SK-N-SH (cell line): ENCODE measurements at regions of chr16 and their contacts with region 1.

Region 1: DNA sequence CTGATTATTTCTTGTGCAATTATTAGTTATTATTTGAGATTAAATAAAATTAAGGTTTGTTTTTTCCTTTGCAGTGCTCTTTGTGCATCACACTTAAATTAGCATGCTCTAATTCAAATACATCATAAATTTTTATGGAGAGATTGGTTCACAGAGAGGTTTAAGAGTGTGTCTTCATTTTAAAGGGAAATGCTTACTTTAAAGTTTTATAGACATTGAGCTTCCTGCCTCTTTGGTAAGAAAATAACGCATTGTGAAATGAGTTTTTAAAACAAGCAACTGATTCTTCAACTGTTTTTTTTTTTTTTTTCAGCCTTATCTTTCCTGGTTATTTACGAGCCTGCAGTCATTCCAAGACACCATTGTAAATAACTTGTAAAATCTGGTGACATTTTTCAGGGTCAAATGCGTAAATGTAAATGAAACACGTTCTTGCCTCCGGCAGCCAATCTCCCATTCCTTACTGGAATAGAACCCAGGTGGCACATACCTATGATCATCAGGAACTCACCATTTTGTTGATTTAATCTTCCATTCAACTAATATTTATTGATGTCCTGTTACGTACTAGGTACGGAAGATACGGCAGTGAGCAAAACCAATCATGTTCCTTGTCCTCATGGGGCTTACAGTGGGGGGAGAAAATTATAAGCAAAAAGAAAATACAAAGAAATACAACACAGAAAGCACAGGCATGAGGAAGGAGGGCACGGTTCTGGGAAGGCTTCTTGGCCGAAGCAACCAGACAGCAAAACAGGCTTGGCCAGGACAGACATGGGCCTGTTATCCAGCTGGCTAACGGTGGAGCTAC is 33.2 kb upstream of the CDYL2 start:
- DNase-seq: no peak
- H3K4me3 ChIP-seq: no peak overlapping the region
- H3K27ac ChIP-seq: no peak overlapping the region
- H3K4me1 ChIP-seq: no peaks in the 10 kb centered on the region
- H3K27me3 ChIP-seq: no peaks in the 10 kb centered on the region; the same call in 1 of the 2 replicates
- CTCF ChIP-seq: no peak
- EP300 ChIP-seq: no peak
- RAD21 ChIP-seq: no peak

Region 2: GRCh38 chr16:80804056-80804450 is 33.6 kb before region 1 on chr16:
- CTCF ChIA-PET with region 1: no interaction called
- POLR2A ChIA-PET with region 1: no interaction called
- DNase-seq: no peak
- H3K4me3 ChIP-seq: peak overlapping the region; percentile 57 to 59; a peak in 3 of 4 replicates
- H3K27ac ChIP-seq: no peak overlapping the region
- H3K4me1 ChIP-seq: peaks cover 0 to 7% of the 10 kb centered on the region in 2 experiments; a peak in 1 of 4 replicates
- H3K27me3 ChIP-seq: no peaks in the 10 kb centered on the region
- CTCF ChIP-seq: no peak
- EP300 ChIP-seq: no peak
- RAD21 ChIP-seq: no peak

Region 3: DNA sequence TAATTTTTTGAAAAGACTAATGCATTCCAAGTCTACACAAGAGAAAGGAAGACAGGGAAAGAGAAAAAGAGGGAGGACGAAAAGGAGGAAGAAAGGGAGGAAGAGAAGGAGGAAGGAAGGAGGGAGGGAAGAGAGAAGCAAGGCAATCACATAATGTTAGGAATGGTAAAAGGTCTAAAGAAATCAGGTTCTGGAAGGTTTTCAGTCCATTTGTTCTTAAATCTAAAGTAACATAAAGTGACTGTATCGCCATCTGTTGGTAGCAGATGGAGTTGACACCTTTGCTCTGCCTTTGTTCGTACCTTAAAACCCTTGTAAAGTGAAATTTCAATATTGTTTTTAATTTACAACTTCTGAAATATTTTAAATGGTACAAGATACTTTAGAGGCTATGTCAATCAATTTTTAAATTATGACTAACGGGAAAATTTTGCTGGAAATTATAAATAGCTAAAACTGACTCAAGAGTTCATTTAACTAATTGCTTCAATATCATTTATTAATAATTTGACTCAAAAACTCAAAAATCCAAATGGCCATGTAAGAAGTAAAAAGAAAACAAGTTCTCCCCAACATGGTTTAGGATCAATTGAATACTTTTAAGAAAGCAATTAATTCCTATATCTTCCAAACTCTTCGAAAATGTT is 12.8 kb before region 1 on chr16:
- CTCF ChIA-PET with region 1: interaction called, 26 read pairs
- POLR2A ChIA-PET with region 1: no interaction called
- DNase-seq: peak; percentile 38
- H3K4me3 ChIP-seq: no peak overlapping the region; a peak in 1 of 4 replicates
- H3K27ac ChIP-seq: no peak overlapping the region
- H3K4me1 ChIP-seq: no peaks in the 10 kb centered on the region
- H3K27me3 ChIP-seq: no peaks in the 10 kb centered on the region; the same call in 1 of the 2 replicates
- CTCF ChIP-seq: peak; percentile 84
- EP300 ChIP-seq: no peak
- RAD21 ChIP-seq: peak; percentile 60

Region 4: DNA sequence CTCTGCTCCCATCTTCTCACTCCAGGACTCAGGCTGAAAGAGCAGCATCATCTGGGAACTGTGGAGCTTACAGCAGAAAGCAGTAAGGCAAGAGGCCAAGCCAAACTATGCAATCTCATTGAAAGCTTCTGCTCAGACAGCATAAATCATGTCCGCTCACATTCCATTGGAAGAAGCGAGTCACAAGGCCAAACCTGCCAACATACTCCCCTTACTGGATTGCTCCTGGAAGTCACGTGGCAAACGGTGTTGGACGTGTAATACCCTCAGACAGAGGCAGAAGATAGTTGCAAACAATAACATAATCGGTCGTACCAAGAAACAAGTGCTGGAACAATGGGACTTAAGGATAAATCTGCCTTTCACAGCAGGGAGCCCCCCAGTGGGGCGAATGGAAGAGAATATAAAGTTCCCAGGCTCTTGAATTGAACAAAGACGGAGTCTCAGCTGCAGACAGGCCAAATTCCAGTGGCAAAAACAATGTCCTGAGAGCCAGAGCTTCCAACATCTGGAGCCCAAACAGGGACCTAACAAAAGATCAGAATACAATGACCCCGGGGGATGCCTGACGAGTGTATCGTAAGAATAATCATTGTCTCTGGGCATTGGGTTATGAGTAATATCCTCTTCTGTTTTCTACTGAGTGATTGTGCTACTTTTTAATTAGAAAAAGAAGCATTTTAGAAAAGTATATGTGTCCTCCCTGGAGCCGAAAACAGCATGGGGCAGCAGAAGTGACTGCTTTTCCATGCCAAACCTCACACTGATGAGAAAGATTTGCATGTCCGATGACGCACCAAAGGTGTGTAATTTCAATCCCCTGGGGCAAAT is 100.6 kb after region 1 on chr16:
- CTCF ChIA-PET with region 1: no interaction called
- POLR2A ChIA-PET with region 1: no interaction called
- DNase-seq: no peak
- H3K4me3 ChIP-seq: peak overlapping the region; percentile 7 to 24; a peak in 2 of 4 replicates
- H3K27ac ChIP-seq: peak overlapping the region; percentile 62 to 80
- H3K4me1 ChIP-seq: peaks cover 0 to 10% of the 10 kb centered on the region in 2 experiments; a peak in 2 of 4 replicates
- H3K27me3 ChIP-seq: no peaks in the 10 kb centered on the region
- CTCF ChIP-seq: 0 out of 2 replicates have a peak, but pooled peaks have one; percentile 6
- EP300 ChIP-seq: peak in 1 of 2 experiments; percentile 55; a peak in 1 of 4 replicates
- RAD21 ChIP-seq: no peak